Right ventricle myocardium superior (tissue), 1 donor: ENCODE measurements at regions of chr6 and their contacts with region 1.

Region 1: DNA sequence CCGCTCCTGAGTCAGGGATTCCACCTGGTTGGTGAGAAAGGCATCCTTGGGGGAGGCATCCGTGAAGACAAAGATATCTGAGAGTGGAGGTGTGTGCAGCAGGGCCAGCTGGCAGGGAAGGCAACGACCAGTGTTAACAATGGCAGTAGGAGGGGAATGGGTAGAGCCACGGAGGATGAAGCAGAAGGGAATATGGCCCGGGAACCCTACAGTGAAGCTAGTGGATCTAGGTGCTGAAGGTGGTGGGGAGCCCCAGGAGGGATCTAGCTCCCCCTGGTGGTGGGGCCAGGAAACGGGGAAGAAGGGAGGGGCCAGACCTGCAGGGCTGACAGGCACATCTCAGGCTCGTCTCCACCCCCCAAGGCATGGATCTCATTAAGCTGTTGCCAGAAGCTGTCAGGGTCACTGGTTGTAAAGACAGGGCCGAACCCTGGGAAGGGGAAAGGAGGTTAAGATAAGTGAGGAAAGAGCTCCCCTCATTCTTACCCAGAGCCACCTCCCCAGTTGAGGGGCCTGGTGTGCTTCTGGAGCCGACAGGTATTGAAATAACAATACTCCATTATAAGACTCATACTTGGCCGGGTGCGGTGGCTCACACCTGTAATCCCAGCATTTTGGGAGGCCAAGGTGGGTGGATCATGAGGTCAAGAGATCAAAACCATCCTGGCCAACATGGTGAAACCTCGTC is 7.3 kb downstream of the VWA7 start:
- DNase-seq: peak; percentile 84
- ATAC-seq: peak; percentile 67

Region 2: DNA sequence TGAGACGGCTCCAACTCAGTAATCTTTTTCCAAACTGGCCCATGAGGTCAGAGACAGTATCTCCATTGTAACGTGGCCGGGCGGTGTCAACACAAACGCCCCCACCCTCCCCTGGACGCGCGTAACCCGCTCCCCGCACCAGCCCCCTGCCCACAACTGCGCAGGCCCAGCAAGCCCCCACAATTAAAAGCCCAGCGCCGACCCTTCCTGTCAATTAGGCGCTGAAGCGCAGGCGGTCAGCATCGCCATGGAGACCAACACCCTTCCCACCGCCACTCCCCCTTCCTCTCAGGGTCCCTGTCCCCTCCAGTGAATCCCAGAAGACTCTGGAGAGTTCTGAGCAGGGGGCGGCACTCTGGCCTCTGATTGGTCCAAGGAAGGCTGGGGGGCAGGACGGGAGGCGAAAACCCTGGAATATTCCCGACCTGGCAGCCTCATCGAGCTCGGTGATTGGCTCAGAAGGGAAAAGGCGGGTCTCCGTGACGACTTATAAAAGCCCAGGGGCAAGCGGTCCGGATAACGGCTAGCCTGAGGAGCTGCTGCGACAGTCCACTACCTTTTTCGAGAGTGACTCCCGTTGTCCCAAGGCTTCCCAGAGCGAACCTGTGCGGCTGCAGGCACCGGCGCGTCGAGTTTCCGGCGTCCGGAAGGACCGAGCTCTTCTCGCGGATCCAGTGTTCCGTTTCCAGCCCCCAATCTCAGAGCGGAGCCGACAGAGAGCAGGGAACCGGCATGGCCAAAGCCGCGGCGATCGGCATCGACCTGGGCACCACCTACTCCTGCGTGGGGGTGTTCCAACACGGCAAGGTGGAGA is 45.4 kb after region 1 on chr6 and contains the starts of genes HSPA1A and HSPA1L:
- intact Hi-C with region 1: no loop called
- DNase-seq: peak; percentile 95
- ATAC-seq: peak; percentile 82
- total RNA-seq, gene HSPA1A: 324 TPM
- total RNA-seq, gene HSPA1L: 2.0 TPM

Region 3: GRCh38 chr6:31834434-31835198 is 64.8 kb after region 1 on chr6:
- intact Hi-C with region 1: loop called (anchors 5 kb)
- DNase-seq: peak; percentile 93
- ATAC-seq: peak; percentile 92